ENCODE measurements at regions of chr11 and their contacts with region 1.

Region 1: DNA sequence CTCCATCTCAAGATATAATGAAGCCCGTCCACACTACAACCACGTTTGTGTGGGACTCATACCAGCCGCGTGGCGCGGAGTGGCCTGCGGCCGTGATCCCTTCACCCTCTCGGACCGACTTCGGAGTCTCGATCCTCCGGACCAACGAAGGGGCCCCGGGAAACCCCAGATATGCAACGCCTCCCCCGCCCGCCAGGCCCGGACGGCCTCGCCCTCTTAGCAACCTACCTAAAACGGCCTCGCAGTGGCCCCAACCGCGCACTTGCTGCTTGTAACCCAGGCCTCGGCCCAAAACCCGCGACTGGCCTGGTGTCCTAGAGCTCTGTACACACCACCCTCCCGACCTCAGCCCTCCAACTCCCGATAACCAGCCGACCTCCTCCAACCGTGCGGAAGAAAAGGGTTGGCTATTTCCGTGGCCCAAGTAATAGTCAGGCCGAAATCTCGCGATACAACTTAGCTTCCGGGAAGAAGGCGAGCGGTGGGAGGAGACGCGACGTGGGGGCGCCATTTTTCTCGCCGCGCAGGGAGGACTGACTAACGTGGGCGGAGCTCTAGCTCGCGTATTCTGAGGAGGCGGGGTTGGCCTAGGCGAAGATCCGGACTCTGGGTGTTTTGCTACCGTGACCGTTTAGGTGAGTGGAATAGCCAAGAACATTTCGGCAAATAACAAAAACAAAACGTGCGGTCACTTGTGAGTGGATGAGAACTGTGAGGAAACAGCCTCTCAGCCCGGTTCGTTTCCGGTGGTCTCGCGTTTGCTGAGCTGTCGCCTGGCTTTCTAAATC is at the starts of genes C11orf54 and TAF1D:
- DNase-seq: peak; percentile 99
- H3K4me3 Mint-ChIP-seq: peak within 1 kb of the TSS; percentile 100
- H3K27ac Mint-ChIP-seq: peak within 1 kb of the TSS; percentile 99
- H3K4me1 Mint-ChIP-seq: peaks cover 41% of the 10 kb centered on the region
- H3K27me3 Mint-ChIP-seq: no peaks in the 10 kb centered on the region
- total RNA-seq, gene C11orf54: 21.6 and 22.2 TPM in 2 replicates
- total RNA-seq, gene TAF1D: 328 and 342 TPM in 2 replicates

Region 2: GRCh38 chr11:93197380-93198214 is 543.7 kb before region 1 on chr11 and contains the start of gene SLC36A4:
- intact Hi-C with region 1: loop called (anchors 5 kb)
- DNase-seq: peak; percentile 96
- H3K4me3 Mint-ChIP-seq: peak within 1 kb of the TSS; percentile 86
- H3K27ac Mint-ChIP-seq: peak within 1 kb of the TSS; percentile 87
- H3K4me1 Mint-ChIP-seq: peaks cover 13% of the 10 kb centered on the region
- H3K27me3 Mint-ChIP-seq: peaks cover 19% of the 10 kb centered on the region
- total RNA-seq, gene SLC36A4: 14.7 and 16.1 TPM in 2 replicates

Region 3: GRCh38 chr11:93689240-93689639 is 52.0 kb before region 1 on chr11:
- intact Hi-C with region 1: loop called (anchors 2 kb)
- DNase-seq: no peak
- H3K4me3 Mint-ChIP-seq: no peak overlapping the region
- H3K27ac Mint-ChIP-seq: peak overlapping the region; percentile 77
- H3K4me1 Mint-ChIP-seq: peaks cover 22% of the 10 kb centered on the region
- H3K27me3 Mint-ChIP-seq: no peaks in the 10 kb centered on the region

Region 4: GRCh38 chr11:93717501-93717900 is 23.8 kb before region 1 on chr11:
- intact Hi-C with region 1: loop called (anchors 1 kb)
- DNase-seq: no peak
- H3K4me3 Mint-ChIP-seq: no peak overlapping the region
- H3K27ac Mint-ChIP-seq: peak overlapping the region; percentile 27
- H3K4me1 Mint-ChIP-seq: peaks cover 20% of the 10 kb centered on the region
- H3K27me3 Mint-ChIP-seq: no peaks in the 10 kb centered on the region

Region 5: DNA sequence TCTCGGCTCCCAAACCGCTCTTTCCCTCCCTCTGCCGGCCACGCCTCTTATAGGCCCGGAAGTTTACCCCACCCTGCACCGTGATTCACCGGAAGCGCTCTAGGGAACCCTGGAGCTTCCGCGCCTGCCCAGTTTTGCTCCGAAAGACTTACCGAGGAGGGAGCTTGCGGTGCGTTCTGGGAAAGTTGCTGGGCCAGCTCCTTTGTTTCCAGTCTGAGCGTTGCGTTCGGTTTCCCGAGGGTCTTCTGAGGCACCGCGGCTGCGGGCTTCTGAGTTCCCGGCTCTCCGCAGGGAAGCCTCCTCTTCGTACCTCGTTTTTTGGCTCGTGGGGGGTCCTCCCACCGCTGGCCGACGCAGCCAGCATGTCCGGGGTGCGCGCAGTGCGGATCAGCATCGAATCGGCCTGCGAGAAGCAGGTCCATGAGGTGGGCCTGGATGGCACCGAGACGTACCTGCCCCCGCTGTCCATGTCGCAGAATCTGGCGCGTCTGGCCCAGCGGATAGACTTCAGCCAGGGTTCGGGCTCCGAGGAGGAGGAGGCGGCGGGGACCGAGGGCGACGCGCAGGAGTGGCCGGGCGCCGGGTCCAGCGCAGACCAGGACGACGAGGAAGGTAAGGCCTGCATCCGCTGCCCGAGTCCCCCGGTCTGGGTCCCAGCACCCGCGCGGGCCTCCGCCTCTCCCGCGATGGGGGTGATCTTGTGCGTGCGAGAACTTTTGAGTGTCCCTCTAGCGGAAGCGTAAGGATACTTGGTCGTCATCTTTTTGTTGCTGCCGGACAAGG is 43.1 kb after region 1 on chr11 and contains the start of gene MED17:
- intact Hi-C with region 1: loop called (anchors 1 kb)
- DNase-seq: peak; percentile 97
- H3K4me3 Mint-ChIP-seq: peak within 1 kb of the TSS; percentile 99
- H3K27ac Mint-ChIP-seq: peak within 1 kb of the TSS; percentile 95
- H3K4me1 Mint-ChIP-seq: peaks cover 41% of the 10 kb centered on the region
- H3K27me3 Mint-ChIP-seq: no peaks in the 10 kb centered on the region
- total RNA-seq, gene MED17: 48.5 and 55.1 TPM in 2 replicates

Region 6: GRCh38 chr11:94128746-94129511 is 387.6 kb after region 1 on chr11 and contains the start of gene PANX1:
- intact Hi-C with region 1: loop called (anchors 1 kb)
- DNase-seq: peak; percentile 94
- H3K4me3 Mint-ChIP-seq: no peak within 1 kb of the TSS
- H3K27ac Mint-ChIP-seq: peak within 1 kb of the TSS; percentile 88
- H3K4me1 Mint-ChIP-seq: peaks cover 21% of the 10 kb centered on the region
- H3K27me3 Mint-ChIP-seq: no peaks in the 10 kb centered on the region
- total RNA-seq, gene PANX1: 19.7 and 20.5 TPM in 2 replicates

Region 7: DNA sequence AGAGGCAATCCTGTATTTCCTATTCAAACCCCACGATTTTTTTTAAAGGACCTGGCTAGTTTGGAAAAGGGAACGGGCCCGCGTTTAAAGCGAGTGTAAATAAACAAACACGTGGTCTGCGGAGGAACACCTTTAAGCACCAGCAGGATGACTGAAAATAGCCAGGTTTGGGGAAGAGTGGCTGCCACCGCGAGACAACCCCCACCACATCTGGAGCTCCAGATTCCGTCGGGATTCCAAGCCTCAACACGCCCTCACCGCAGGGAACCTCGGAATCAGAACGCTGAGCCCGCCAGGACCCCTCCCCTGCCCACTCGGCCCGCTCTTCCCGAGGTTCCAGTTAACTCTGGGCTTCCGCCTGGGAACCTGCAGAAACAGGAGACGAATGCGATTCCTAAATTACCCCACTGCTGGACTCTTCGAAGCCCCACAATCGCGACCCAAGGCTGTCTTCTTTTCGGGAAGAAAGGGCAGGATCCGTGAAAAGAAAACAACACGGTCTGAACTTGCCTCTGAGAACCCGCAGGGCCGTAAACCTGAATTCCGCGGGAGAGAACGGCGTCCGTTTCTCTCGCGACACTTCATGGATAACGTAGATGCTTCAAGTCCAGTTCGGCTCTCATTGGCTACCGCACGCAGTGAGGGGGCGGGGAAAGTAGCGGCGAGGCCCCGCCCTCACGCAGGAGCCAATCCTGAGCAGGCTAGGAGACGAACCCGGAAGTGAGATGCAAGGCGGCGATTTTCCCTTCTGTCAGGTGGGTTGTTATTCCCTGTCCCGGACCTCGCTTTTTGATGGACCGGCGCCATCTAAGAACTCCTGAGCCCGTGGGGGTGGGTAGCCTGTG is 752.2 kb after region 1 on chr11 and contains the starts of genes ANKRD49 and MRE11:
- intact Hi-C with region 1: loop called (anchors 1 kb)
- DNase-seq: peak; percentile 99
- H3K4me3 Mint-ChIP-seq: peak within 1 kb of the TSS; percentile 96
- H3K27ac Mint-ChIP-seq: peak within 1 kb of the TSS; percentile 95
- H3K4me1 Mint-ChIP-seq: peaks cover 30% of the 10 kb centered on the region
- H3K27me3 Mint-ChIP-seq: no peaks in the 10 kb centered on the region
- total RNA-seq, gene ANKRD49: 18.4 and 22.6 TPM in 2 replicates
- total RNA-seq, gene MRE11: 45.4 and 46.5 TPM in 2 replicates

Measured in activated CD4-positive, alpha-beta T cell treated with anti-CD3 and anti-CD28 coated beads, Interleukin-2, amount 10 ng/mL, durations not matched to agents 24 days and 14 days (primary cell).